ENCODE measurements at regions of chr19 and their contacts with region 1.

Region 1: DNA sequence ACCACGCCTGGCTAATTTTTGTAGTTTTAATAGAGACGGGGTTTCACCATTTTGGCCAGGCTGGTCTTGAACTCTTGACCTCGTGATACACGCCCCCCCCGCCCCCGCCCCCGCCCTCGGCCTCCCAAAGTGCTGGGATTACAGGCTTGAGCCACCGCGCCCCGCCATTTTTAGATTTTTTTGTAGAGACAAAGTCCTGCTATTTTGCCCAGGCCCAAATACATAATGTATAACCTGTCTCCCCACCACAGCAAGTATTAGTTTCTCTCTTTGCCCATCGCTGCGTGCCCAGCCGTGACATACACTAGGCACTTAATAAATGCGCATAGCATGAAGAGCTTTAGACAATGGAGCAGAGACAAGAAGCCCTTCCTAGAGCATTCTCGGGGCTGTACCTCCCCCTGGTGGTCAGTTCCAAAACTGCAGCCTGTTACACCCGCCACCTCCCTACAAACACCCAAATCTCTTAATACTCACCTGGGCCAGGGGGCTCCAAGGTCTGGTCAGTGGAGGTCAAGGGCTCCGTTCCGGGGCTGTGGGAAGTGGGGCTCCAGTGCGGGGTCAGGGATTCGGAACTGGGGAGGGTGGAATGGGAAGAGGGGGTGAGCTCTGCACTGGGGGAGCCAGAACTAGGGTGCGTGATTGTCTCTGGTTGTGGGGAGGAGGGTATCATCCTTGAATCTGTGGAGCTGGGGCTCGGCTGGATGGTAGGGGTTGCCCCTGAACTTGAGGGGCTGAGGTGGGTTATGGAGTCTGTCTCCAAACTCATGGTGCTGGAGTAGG is 22.5 kb downstream of the IQCN start:
- DNase-seq: peak; percentile 80
- H3K4me3 Mint-ChIP-seq: no peak overlapping the region
- H3K27ac Mint-ChIP-seq: no peak overlapping the region
- H3K4me1 Mint-ChIP-seq: peaks cover 2% of the 10 kb centered on the region
- H3K27me3 Mint-ChIP-seq: peaks cover 24% of the 10 kb centered on the region

Region 2: DNA sequence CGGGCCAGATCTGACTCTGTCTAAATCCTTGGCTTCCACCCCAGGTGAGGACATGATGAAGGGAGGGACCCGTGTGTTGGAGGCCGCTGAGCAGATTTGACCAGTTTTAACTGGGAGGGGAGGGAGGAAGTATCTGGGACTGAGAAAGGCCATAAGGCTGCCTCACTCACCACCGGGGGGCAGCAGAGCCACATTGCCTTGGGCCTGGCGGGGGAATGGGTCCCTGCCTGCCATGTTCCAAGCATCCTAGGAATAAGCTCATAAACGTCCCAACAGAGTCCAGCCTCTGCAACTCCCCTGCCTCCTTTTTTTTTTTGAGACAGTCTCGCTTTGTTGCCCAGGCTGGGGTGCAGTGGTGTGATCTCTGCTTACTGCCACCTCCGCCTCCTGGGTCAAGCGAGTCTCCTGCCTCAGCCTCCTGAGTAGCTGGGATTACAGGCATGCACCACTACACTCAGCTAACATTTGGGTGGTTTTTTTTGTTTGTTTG is 138.7 kb before region 1 on chr19:
- CTCF ChIA-PET with region 1: interaction called, 10 read pairs
- POLR2A ChIA-PET with region 1: no interaction called
- DNase-seq: peak; percentile 84
- H3K4me3 Mint-ChIP-seq: no peak overlapping the region
- H3K27ac Mint-ChIP-seq: no peak overlapping the region
- H3K4me1 Mint-ChIP-seq: peaks cover 25% of the 10 kb centered on the region
- H3K27me3 Mint-ChIP-seq: no peaks in the 10 kb centered on the region

Region 3: GRCh38 chr19:18203863-18204393 is 47.9 kb before region 1 on chr19 and contains the start of gene RAB3A:
- CTCF ChIA-PET with region 1: interaction called, 21 read pairs
- POLR2A ChIA-PET with region 1: no interaction called
- DNase-seq: peak; percentile 100
- H3K4me3 Mint-ChIP-seq: peak within 1 kb of the TSS; percentile 94
- H3K27ac Mint-ChIP-seq: peak within 1 kb of the TSS; percentile 98
- H3K4me1 Mint-ChIP-seq: peaks cover 23% of the 10 kb centered on the region
- H3K27me3 Mint-ChIP-seq: peaks cover 4% of the 10 kb centered on the region
- total RNA-seq, gene RAB3A: 4.0 to 5.2 TPM

Region 4: DNA sequence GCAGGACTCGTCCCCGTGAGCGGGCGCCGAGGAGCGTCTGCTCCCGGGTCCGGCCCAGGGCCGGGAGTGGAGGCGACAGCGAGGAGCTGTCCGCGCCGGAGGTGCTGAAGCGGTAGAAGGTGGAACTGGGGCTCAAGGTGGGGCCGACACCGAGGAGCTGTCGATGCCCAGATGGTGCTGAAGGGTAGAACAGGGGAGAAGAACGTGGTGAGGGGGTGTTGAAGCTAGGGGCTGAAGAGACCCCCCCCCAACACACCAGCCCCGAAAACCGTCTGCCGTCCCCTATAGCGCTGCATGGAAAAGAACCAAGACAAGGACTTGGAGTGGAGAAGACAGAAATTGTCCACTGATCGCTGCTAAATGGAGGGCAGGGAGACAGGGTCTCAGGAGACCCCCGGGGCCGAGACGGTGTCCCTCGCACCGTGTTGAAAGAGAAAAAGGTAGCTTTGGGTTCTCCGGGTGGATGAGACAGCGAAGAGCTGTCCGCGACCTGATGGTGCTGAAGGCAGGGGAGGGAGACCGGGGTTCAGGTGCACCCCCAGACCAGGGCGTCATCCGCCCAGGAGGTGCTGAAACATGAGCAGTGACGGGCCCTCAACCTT is 18.5 kb before region 1 on chr19:
- CTCF ChIA-PET with region 1: interaction called, 18 read pairs
- POLR2A ChIA-PET with region 1: no interaction called
- DNase-seq: peak; percentile 69
- H3K4me3 Mint-ChIP-seq: no peak overlapping the region
- H3K27ac Mint-ChIP-seq: no peak overlapping the region
- H3K4me1 Mint-ChIP-seq: peaks cover 4% of the 10 kb centered on the region
- H3K27me3 Mint-ChIP-seq: peaks cover 28% of the 10 kb centered on the region